ENCODE measurements at regions of chr7 and their contacts with region 1.

Region 1: GRCh38 chr7:26187380-26188205 is 13.0 kb downstream of the HNRNPA2B1 start:
- DNase-seq: peak; percentile 40
- ATAC-seq: peak; percentile 21
- H3K4me3 Mint-ChIP-seq: peak overlapping the region; percentile 11
- H3K27ac Mint-ChIP-seq: peak overlapping the region; percentile 85
- H3K4me1 Mint-ChIP-seq: peaks cover 87% of the 10 kb centered on the region
- H3K27me3 Mint-ChIP-seq: no peaks in the 10 kb centered on the region
- CTCF ChIP-seq: no peak

Region 2: DNA sequence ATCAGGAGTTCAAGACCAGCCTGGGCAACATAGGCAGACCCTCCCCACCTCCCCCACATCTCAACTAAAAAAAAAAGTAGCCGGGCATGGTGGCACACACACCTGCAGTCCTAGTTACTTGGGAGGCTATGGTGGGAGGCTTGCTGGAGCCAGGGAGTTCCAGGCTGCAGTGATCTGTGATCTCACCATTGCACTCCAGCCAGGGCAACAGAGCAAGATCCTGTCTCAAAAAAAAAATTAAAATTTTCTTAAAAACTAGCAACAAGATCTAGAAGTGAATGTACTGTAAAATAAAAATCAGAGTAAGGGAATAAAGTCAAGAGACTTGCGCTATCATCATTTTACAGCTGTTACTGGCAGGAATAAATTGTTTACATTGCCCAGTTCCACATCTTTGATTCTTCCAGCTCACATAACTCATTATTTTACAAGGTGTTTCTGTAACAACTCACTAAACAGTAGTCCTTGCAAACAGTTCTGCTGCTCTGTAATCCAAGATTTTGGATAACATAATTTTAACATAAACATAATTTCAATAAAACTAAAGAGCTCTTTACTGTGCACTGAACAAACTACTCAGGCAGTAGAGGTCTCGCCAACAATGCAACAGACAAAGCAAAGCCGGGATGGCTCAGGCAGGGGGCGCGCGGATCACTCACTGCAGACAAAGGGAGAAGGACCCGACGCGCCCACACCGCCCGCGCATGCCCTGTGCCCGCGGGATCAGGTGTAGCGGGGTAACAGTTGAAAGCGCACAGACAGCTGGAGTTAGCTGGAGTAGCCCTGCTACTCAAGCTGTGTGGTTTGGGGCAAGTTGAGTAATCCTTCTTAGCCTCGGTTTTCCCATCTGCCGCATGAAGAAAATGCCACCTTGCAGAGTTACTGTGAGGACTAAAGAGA is 108.9 kb before region 1 on chr7:
- CTCF ChIA-PET with region 1: interaction called, 13 read pairs
- POLR2A ChIA-PET with region 1: interaction called, 23 read pairs
- intact Hi-C with region 1: no loop called
- DNase-seq: peak; percentile 92
- ATAC-seq: peak; percentile 99
- H3K4me3 Mint-ChIP-seq: no peak overlapping the region
- H3K27ac Mint-ChIP-seq: no peak overlapping the region
- H3K4me1 Mint-ChIP-seq: peaks cover 6% of the 10 kb centered on the region
- H3K27me3 Mint-ChIP-seq: peaks cover 18% of the 10 kb centered on the region
- CTCF ChIP-seq: peak; percentile 75

Region 3: DNA sequence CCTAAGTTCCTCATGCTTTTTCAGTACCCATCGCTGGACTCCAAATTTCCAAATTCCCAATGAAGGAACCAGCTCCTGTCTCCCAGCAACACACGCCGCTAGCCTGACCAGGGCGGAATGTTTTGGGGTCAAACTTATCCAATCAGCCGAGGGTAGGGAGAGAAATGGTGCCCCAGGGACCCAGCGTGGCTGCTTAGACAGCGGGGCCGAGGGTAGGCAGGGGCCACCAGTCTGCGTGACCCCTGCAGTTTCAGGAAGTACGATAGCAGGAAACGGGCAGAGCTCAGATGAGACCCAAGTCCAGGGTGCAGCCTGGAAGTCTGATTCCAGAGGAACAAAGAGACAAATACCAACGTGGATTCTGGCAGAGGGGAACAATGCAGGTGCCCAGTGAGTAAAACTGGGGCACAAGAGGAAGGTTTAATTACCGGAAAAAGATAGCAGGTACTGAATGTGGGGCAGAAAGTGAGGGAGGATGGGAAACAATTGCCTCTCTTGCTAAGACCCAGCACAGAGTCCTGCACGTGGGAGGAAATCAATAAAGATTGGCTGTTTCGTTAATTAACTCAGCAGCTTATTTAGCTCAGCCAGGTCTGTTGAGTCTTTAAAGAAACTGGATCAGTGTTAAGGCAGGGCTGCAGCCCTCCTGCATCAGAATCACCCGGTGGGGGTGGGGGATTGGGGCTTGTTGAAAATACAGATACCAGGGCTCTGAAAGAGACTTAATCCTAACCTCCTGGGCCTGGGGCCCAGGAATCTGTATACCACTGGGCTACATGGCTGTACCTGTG is 86.0 kb before region 1 on chr7:
- CTCF ChIA-PET with region 1: no interaction called
- POLR2A ChIA-PET with region 1: interaction called, 12 read pairs
- intact Hi-C with region 1: no loop called
- DNase-seq: peak; percentile 30
- ATAC-seq: no peak
- H3K4me3 Mint-ChIP-seq: peak overlapping the region; percentile 60
- H3K27ac Mint-ChIP-seq: peak overlapping the region; percentile 83
- H3K4me1 Mint-ChIP-seq: peaks cover 47% of the 10 kb centered on the region
- H3K27me3 Mint-ChIP-seq: no peaks in the 10 kb centered on the region
- CTCF ChIP-seq: no peak

Region 4: DNA sequence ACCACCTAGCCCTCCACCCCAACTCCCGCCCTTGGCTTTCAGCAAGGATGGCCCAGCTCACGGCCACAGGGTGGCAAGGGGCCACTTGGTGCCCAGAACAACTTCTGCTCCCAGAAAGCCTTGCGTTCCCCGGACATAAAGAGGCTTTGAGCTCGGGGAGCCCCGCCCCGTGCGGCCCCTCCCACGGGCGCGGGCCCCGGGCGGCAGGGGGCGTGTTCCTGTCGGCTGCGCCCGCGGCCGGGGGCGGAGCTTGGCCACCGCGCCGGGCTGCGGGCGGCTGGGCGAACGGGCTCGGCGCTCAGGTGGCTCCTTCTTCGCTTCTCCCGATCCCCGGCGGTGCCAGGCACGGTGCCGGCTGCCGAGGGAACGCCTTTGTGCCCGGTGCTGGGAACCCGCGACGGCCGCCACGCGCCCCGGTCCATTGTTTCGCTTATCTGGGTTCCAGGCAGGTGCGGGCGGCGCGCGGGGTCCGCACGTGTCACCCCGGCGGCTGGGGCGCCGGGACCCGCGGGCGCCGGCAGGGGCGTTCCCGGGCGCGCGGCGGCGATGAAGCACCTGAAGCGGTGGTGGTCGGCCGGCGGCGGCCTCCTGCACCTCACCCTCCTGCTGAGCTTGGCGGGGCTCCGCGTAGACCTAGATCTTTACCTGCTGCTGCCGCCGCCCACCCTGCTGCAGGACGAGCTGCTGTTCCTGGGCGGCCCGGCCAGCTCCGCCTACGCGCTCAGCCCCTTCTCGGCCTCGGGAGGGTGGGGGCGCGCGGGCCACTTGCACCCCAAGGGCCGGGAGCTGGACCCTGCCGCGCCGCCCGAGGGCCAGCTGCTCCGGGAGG is 35.4 kb before region 1 on chr7 and contains the start of gene NFE2L3:
- CTCF ChIA-PET with region 1: interaction called, 13 read pairs
- POLR2A ChIA-PET with region 1: interaction called, 359 read pairs
- intact Hi-C with region 1: loop called (anchors 1 kb)
- DNase-seq: peak; percentile 88
- ATAC-seq: peak; percentile 72
- H3K4me3 Mint-ChIP-seq: peak within 1 kb of the TSS; percentile 96
- H3K27ac Mint-ChIP-seq: peak within 1 kb of the TSS; percentile 99
- H3K4me1 Mint-ChIP-seq: peaks cover 51% of the 10 kb centered on the region
- H3K27me3 Mint-ChIP-seq: no peaks in the 10 kb centered on the region
- CTCF ChIP-seq: no peak
- total RNA-seq, gene NFE2L3: 21.5 to 22.6 TPM

Region 5: GRCh38 chr7:26159243-26159642 is 28.4 kb before region 1 on chr7:
- CTCF ChIA-PET with region 1: interaction called, 4 read pairs
- POLR2A ChIA-PET with region 1: interaction called, 359 read pairs
- intact Hi-C with region 1: no loop called
- DNase-seq: no peak
- ATAC-seq: no peak
- H3K4me3 Mint-ChIP-seq: no peak overlapping the region
- H3K27ac Mint-ChIP-seq: peak overlapping the region; percentile 44
- H3K4me1 Mint-ChIP-seq: peaks cover 88% of the 10 kb centered on the region
- H3K27me3 Mint-ChIP-seq: no peaks in the 10 kb centered on the region
- CTCF ChIP-seq: no peak

Region 6: DNA sequence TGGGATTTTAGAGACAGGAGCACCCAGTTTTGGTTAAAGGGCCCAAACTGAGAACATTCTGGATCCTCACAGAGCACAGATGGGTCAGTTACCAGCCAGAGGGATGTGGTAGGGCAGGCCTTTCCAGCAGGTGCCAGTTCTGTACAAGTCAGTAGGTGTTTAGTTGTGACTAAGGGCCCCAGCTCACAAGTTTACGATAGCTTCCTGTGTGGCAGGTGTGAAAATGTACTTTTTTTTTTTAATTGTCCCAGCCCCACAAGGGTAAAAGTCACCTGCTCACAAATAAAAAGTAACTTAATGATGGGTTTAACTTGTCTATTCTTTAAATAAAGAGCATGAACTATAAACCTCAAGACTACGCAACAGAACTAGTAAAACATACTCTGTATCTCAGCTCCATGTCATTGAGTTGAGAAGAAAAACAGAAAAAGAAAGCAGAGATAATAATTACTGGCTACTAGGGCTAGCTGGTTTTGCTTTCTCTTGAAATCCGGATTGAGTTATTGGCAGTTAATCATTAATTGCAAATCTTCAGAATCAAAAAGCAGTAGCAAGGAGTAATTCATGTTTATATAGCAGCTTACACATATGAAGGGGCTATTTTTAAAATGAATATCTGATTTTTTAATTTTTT is 20.2 kb before region 1 on chr7:
- CTCF ChIA-PET with region 1: interaction called, 6 read pairs
- POLR2A ChIA-PET with region 1: interaction called, 359 read pairs
- intact Hi-C with region 1: no loop called
- DNase-seq: peak; percentile 70
- ATAC-seq: peak; percentile 85
- H3K4me3 Mint-ChIP-seq: peak overlapping the region; percentile 9
- H3K27ac Mint-ChIP-seq: peak overlapping the region; percentile 86
- H3K4me1 Mint-ChIP-seq: peaks cover 47% of the 10 kb centered on the region
- H3K27me3 Mint-ChIP-seq: no peaks in the 10 kb centered on the region
- CTCF ChIP-seq: no peak

Region 7: DNA sequence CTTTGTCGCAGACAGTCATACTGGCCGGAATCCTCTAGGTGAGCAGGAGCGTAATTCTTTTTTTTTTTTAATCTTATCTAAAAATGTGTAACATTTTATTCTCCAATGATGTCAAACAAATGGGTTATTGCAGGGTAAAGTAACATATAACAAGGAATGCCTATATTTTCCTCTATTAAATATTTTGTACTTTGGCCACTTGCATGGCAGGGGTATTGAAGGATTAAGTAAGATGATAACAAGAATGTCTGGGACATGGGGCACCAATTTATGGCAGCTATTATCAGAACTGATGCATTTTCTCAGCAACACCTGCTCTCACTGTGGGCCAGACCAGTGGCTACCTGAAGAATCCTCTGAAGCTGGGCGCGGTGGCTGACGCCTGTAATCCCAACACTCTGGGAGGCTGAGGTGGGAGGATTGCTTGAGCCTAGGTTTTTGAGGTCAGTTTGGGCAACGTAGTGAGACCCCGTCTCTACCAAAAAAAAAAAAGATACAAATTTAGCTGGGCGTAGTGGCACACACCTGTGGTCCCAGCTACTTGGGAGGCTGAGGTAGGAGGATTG is 80.1 kb after region 1 on chr7:
- CTCF ChIA-PET with region 1: no interaction called
- POLR2A ChIA-PET with region 1: no interaction called
- intact Hi-C with region 1: no loop called
- DNase-seq: no peak
- ATAC-seq: no peak
- H3K4me3 Mint-ChIP-seq: no peak overlapping the region
- H3K27ac Mint-ChIP-seq: no peak overlapping the region
- H3K4me1 Mint-ChIP-seq: peaks cover 1% of the 10 kb centered on the region
- H3K27me3 Mint-ChIP-seq: peaks cover 3% of the 10 kb centered on the region
- CTCF ChIP-seq: no peak

Region 8: GRCh38 chr7:26291699-26292538 is 104.3 kb after region 1 on chr7 and contains the start of gene SNX10:
- CTCF ChIA-PET with region 1: no interaction called
- POLR2A ChIA-PET with region 1: interaction called, 15 read pairs
- intact Hi-C with region 1: no loop called
- DNase-seq: peak; percentile 77
- ATAC-seq: peak; percentile 69
- H3K4me3 Mint-ChIP-seq: peak within 1 kb of the TSS; percentile 96
- H3K27ac Mint-ChIP-seq: peak within 1 kb of the TSS; percentile 91
- H3K4me1 Mint-ChIP-seq: peaks cover 28% of the 10 kb centered on the region
- H3K27me3 Mint-ChIP-seq: no peaks in the 10 kb centered on the region
- CTCF ChIP-seq: no peak
- total RNA-seq, gene SNX10: 47.8 to 51.1 TPM

Measured in activated CD8-positive, alpha-beta T cell treated with anti-CD3 and anti-CD28 coated beads for 36 hours (primary cell).